H1 (cell line): ENCODE measurements at regions of chr10 and their contacts with region 1.

Region 1: GRCh38 chr10:30529373-30529998 is 95.5 kb downstream of the MAP3K8 start:
- DNase-seq: no peak
- H3K4me3 ChIP-seq: no peak overlapping the region
- H3K27ac ChIP-seq: no peak overlapping the region
- H3K4me1 ChIP-seq: peaks cover 0 to 9% (median 2%) of the 10 kb centered on the region in 4 experiments; a peak in 5 of 7 replicates
- H3K27me3 ChIP-seq: no peaks in the 10 kb centered on the region
- CTCF ChIP-seq: no peak
- EP300 ChIP-seq: no peak
- POLR2A ChIP-seq: no peak
- RAD21 ChIP-seq: no peak

Region 2: GRCh38 chr10:30392564-30392990 is 136.9 kb before region 1 on chr10:
- CTCF ChIA-PET with region 1: interaction called, 23 read pairs
- POLR2A ChIA-PET with region 1: no interaction called
- DNase-seq: peak; percentile 47 to 93
- H3K4me3 ChIP-seq: no peak overlapping the region
- H3K27ac ChIP-seq: no peak overlapping the region
- H3K4me1 ChIP-seq: peaks cover 0 to 2% (median 0%) of the 10 kb centered on the region in 4 experiments; a peak in 2 of 7 replicates
- H3K27me3 ChIP-seq: no peaks in the 10 kb centered on the region
- CTCF ChIP-seq: peak; percentile 93 to 98 (median 93)
- EP300 ChIP-seq: no peak
- POLR2A ChIP-seq: no peak
- RAD21 ChIP-seq: peak; percentile 97 to 98

Region 3: DNA sequence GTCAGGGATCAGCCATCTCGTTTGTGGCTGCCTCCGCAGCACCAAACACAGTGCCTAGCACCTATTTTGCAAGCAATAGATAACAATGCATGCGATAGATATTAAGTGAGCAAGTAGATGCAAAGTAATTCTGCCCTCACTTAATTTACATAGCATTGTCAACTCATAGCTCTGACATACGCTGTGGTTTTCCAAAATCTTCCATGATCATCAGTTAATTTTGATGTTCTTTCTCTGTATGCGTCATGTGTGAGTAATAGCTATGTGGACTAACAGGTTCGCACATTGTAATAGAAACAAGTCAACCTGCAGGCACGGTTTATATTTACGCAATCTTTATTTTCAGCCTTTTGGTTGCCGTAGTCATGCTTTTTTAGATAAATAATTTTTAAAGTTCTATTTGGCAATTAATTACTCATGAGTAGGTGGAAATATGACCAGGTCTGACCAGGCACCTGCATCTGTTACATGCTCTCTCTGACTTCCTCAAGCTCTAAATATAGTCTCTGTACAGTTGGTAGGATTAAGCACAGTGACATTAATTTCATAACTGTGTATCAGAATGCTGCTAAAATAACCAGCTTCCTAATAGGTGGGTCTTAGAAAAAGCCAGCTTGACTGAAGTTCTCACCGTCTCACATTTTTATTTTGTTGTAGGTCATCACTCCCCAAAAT is 82.2 kb before region 1 on chr10:
- CTCF ChIA-PET with region 1: no interaction called
- POLR2A ChIA-PET with region 1: no interaction called
- DNase-seq: no peak
- H3K4me3 ChIP-seq: no peak overlapping the region
- H3K27ac ChIP-seq: no peak overlapping the region
- H3K4me1 ChIP-seq: no peaks in the 10 kb centered on the region
- H3K27me3 ChIP-seq: peaks cover 0 to 1% (median 0%) of the 10 kb centered on the region in 4 experiments; a peak in 1 of 7 replicates
- CTCF ChIP-seq: no peak
- EP300 ChIP-seq: no peak
- POLR2A ChIP-seq: no peak
- RAD21 ChIP-seq: no peak